RWPE1 (cell line): ENCODE measurements at regions of chr6 and their contacts with region 1.

Region 1: DNA sequence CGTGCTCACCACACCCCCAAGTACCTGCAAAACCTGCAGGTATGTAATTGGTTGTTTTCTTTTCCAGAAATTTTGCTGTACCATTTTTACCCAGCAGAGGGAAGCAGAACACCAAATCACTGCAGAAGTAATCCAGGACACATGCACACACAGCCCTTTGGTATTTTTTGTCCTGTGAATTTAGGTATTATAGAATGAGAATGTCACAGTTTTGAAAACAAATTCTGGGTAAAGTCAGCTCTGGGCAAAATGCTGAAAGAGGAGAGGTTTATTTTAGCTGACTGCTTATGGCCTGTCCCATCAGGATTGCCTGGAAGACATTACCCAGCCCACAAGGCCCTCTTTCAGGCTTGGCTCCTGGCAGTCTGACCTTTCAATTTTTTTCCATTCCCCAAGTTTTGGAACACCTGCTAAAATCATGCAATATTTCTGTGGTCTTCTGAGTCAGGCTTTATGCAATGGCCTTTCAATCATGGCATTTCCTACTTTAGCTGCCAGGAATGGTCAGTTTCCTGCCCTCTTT is 3.5 kb upstream of the EFHC1 start:
- DNase-seq: peak; percentile 57
- H3K27ac ChIP-seq: peak overlapping the region; percentile 78
- CTCF ChIP-seq: peak; percentile 86

Region 2: DNA sequence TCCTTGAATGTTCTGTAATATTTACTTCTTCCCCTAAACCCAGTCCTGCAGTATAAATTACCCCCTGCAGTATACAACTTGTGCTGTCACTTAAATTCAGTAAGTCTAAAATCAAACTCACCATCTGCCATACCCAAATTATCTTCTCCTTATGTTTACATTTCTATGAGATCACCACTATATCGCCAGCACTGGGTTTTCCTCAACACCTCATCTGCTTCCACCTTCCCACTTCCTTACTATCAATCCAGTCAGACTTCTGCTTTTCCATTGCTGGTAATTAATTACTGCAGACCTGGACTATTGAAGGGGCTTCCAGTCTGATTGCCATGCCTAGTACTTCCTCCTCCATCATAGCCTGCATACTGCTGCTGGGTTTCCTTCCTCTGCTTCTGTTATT is 18.7 kb after region 1 on chr6:
- CTCF ChIA-PET with region 1: no interaction called
- POLR2A ChIA-PET with region 1: no interaction called
- DNase-seq: no peak
- H3K27ac ChIP-seq: no peak overlapping the region
- CTCF ChIP-seq: no peak

Region 3: DNA sequence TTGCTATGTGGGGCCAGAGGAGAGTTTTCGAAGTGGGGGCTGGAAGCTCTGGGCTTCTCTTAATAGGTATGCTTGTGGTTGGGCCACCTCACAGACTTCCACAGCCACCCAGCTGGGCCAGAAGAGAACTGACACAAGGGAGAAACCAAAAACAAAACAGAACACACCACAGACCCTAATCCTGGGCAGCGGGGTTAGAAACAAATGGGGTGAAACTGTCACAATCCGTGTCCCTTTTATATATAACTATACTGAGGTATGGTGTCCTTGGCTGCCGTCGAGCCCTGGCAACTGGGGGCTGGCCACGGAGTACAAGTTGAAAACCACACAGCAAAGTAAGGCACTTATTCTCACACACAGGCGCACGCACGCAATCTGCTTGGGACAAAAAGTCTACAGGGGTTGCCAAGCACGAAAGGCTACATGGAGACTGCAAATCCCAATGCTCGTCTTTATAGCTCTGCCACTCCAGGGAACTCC is 81.9 kb after region 1 on chr6:
- CTCF ChIA-PET with region 1: interaction called, 4 read pairs
- POLR2A ChIA-PET with region 1: interaction called, 11 read pairs
- DNase-seq: no peak
- H3K27ac ChIP-seq: peak overlapping the region; percentile 30
- CTCF ChIP-seq: no peak

Region 4: GRCh38 chr6:52595000-52595795 is 178.5 kb after region 1 on chr6:
- CTCF ChIA-PET with region 1: interaction called, 10 read pairs
- POLR2A ChIA-PET with region 1: no interaction called
- DNase-seq: peak; percentile 42
- H3K27ac ChIP-seq: peak overlapping the region; percentile 54
- CTCF ChIP-seq: no peak

Region 5: GRCh38 chr6:52663120-52663935 is 246.6 kb after region 1 on chr6:
- CTCF ChIA-PET with region 1: interaction called, 18 read pairs
- POLR2A ChIA-PET with region 1: no interaction called
- DNase-seq: peak; percentile 64
- H3K27ac ChIP-seq: peak overlapping the region; percentile 76
- CTCF ChIP-seq: peak; percentile 81

Region 6: GRCh38 chr6:52697903-52698302 is 281.2 kb after region 1 on chr6:
- CTCF ChIA-PET with region 1: no interaction called
- POLR2A ChIA-PET with region 1: no interaction called
- DNase-seq: peak; percentile 26
- H3K27ac ChIP-seq: no peak overlapping the region
- CTCF ChIP-seq: no peak